SK-N-SH (cell line): ENCODE measurements at regions of chr10 and their contacts with region 1.

Region 1: GRCh38 chr10:126749015-126749655 is 78.6 kb upstream of the C10orf90 start:
- DNase-seq: peak; percentile 61
- H3K4me3 ChIP-seq: no peak overlapping the region; a peak in 1 of 4 replicates
- H3K27ac ChIP-seq: no peak overlapping the region
- H3K4me1 ChIP-seq: no peaks in the 10 kb centered on the region
- H3K27me3 ChIP-seq: no peaks in the 10 kb centered on the region
- CTCF ChIP-seq: peak; percentile 73
- EP300 ChIP-seq: no peak
- RAD21 ChIP-seq: peak; percentile 82

Region 2: GRCh38 chr10:125936331-125936730 is 812.8 kb before region 1 on chr10:
- CTCF ChIA-PET with region 1: interaction called, 19 read pairs
- POLR2A ChIA-PET with region 1: no interaction called
- DNase-seq: no peak
- H3K4me3 ChIP-seq: no peak overlapping the region
- H3K27ac ChIP-seq: no peak overlapping the region
- H3K4me1 ChIP-seq: peaks cover 0 to 7% of the 10 kb centered on the region in 2 experiments; a peak in 1 of 4 replicates
- H3K27me3 ChIP-seq: no peaks in the 10 kb centered on the region
- CTCF ChIP-seq: no peak
- EP300 ChIP-seq: no peak
- RAD21 ChIP-seq: no peak

Region 3: GRCh38 chr10:126199221-126199998 is 549.7 kb before region 1 on chr10:
- CTCF ChIA-PET with region 1: no interaction called
- POLR2A ChIA-PET with region 1: no interaction called
- DNase-seq: no peak
- H3K4me3 ChIP-seq: peak overlapping the region in 1 of 2 experiments; percentile 0; a peak in 2 of 4 replicates
- H3K27ac ChIP-seq: peak overlapping the region; percentile 62 to 95; a peak in 3 of 4 replicates
- H3K4me1 ChIP-seq: peaks cover 2 to 19% of the 10 kb centered on the region in 2 experiments; a peak in 3 of 4 replicates
- H3K27me3 ChIP-seq: no peaks in the 10 kb centered on the region
- CTCF ChIP-seq: no peak
- EP300 ChIP-seq: peak; percentile 23 to 100; a peak in 3 of 4 replicates
- RAD21 ChIP-seq: no peak

Region 4: DNA sequence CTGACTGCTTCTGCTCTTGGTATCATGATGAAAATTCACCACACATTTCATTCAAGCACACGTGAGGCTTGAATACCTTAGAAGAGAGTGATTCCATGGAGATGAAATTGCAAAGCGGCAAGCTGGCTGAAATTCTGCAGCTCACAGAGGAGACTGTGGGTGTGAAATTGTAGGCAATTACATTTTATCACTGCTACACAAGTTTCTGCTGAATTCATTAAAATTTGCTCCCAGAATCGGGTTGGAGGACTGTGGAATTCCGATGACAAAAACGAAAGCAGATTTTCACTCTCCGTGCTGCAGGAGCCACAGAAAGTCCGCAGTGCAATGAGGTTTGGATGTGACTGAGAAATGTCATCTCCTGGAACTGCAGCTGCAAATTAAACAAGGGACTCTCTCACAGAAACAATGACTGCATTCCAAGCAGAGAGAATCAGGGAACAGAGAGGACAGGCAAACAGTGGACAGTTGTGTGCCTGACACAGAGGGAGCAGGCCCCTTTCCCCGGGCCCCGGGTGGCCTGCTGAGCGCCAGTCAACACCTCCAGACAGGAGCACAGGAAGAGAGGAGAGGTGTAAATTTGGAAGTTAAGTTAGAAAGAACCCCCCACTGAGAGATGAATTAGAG is 187.7 kb before region 1 on chr10:
- CTCF ChIA-PET with region 1: no interaction called
- POLR2A ChIA-PET with region 1: no interaction called
- DNase-seq: no peak
- H3K4me3 ChIP-seq: no peak overlapping the region
- H3K27ac ChIP-seq: no peak overlapping the region
- H3K4me1 ChIP-seq: no peaks in the 10 kb centered on the region
- H3K27me3 ChIP-seq: no peaks in the 10 kb centered on the region
- CTCF ChIP-seq: no peak
- EP300 ChIP-seq: no peak
- RAD21 ChIP-seq: no peak

Region 5: GRCh38 chr10:126690534-126690933 is 58.6 kb before region 1 on chr10:
- CTCF ChIA-PET with region 1: no interaction called
- POLR2A ChIA-PET with region 1: no interaction called
- DNase-seq: no peak
- H3K4me3 ChIP-seq: no peak overlapping the region
- H3K27ac ChIP-seq: no peak overlapping the region
- H3K4me1 ChIP-seq: no peaks in the 10 kb centered on the region
- H3K27me3 ChIP-seq: no peaks in the 10 kb centered on the region
- CTCF ChIP-seq: no peak
- EP300 ChIP-seq: no peak
- RAD21 ChIP-seq: no peak

Region 6: GRCh38 chr10:126731610-126731990 is 17.5 kb before region 1 on chr10:
- CTCF ChIA-PET with region 1: interaction called, 10 read pairs
- POLR2A ChIA-PET with region 1: no interaction called
- DNase-seq: no peak
- H3K4me3 ChIP-seq: no peak overlapping the region
- H3K27ac ChIP-seq: no peak overlapping the region
- H3K4me1 ChIP-seq: no peaks in the 10 kb centered on the region
- H3K27me3 ChIP-seq: no peaks in the 10 kb centered on the region; the same call in 1 of the 2 replicates
- CTCF ChIP-seq: no peak
- EP300 ChIP-seq: no peak
- RAD21 ChIP-seq: no peak